ENCODE measurements at regions of chr9 and their contacts with region 1.

Region 1: GRCh38 chr9:20552874-20553575 is 69.3 kb downstream of the MLLT3 start:
- DNase-seq: peak; percentile 47
- ATAC-seq: peak; percentile 67
- H3K4me3 Mint-ChIP-seq: peak overlapping the region; percentile 49
- H3K27ac Mint-ChIP-seq: peak overlapping the region; percentile 82
- H3K4me1 Mint-ChIP-seq: peaks cover 67% of the 10 kb centered on the region
- H3K27me3 Mint-ChIP-seq: no peaks in the 10 kb centered on the region

Region 2: GRCh38 chr9:20526500-20527319 is 26.3 kb before region 1 on chr9:
- CTCF ChIA-PET with region 1: no interaction called
- DNase-seq: no peak
- ATAC-seq: no peak
- H3K4me3 Mint-ChIP-seq: no peak overlapping the region
- H3K27ac Mint-ChIP-seq: no peak overlapping the region
- H3K4me1 Mint-ChIP-seq: peaks cover 59% of the 10 kb centered on the region
- H3K27me3 Mint-ChIP-seq: no peaks in the 10 kb centered on the region

Region 3: GRCh38 chr9:20622330-20623020 is 69.5 kb after region 1 on chr9 and contains the start of gene MLLT3:
- CTCF ChIA-PET with region 1: interaction called, 13 read pairs
- DNase-seq: peak; percentile 98
- ATAC-seq: peak; percentile 86
- H3K4me3 Mint-ChIP-seq: peak within 1 kb of the TSS; percentile 100
- H3K27ac Mint-ChIP-seq: peak within 1 kb of the TSS; percentile 94
- H3K4me1 Mint-ChIP-seq: peaks cover 37% of the 10 kb centered on the region
- H3K27me3 Mint-ChIP-seq: no peaks in the 10 kb centered on the region
- total RNA-seq, gene MLLT3: 55.9 to 56.4 TPM